ENCODE measurements at regions of chr4 and their contacts with region 1.

Region 1: GRCh38 chr4:2536193-2537010 is at the start of gene FAM193A:
- DNase-seq: peak; percentile 100
- H3K4me3 Mint-ChIP-seq: peak within 1 kb of the TSS; percentile 87
- H3K27ac Mint-ChIP-seq: peak within 1 kb of the TSS; percentile 86
- H3K4me1 Mint-ChIP-seq: peaks cover 20% of the 10 kb centered on the region
- H3K27me3 Mint-ChIP-seq: no peaks in the 10 kb centered on the region
- total RNA-seq, gene FAM193A: 21.7 to 22.6 TPM

Region 2: GRCh38 chr4:2484993-2485392 is 51.4 kb before region 1 on chr4:
- CTCF ChIA-PET with region 1: interaction called, 4 read pairs
- POLR2A ChIA-PET with region 1: no interaction called
- intact Hi-C with region 1: loop called (anchors 5 kb)
- DNase-seq: peak; percentile 80
- H3K4me3 Mint-ChIP-seq: peak overlapping the region; percentile 17
- H3K27ac Mint-ChIP-seq: peak overlapping the region; percentile 34
- H3K4me1 Mint-ChIP-seq: peaks cover 86% of the 10 kb centered on the region
- H3K27me3 Mint-ChIP-seq: no peaks in the 10 kb centered on the region

Region 3: GRCh38 chr4:2755837-2756694 is 219.7 kb after region 1 on chr4 and contains the start of gene TNIP2:
- CTCF ChIA-PET with region 1: no interaction called
- POLR2A ChIA-PET with region 1: no interaction called
- intact Hi-C with region 1: loop called (anchors 1 kb)
- DNase-seq: peak; percentile 86
- H3K4me3 Mint-ChIP-seq: peak within 1 kb of the TSS; percentile 84
- H3K27ac Mint-ChIP-seq: peak within 1 kb of the TSS; percentile 84
- H3K4me1 Mint-ChIP-seq: peaks cover 41% of the 10 kb centered on the region
- H3K27me3 Mint-ChIP-seq: no peaks in the 10 kb centered on the region
- total RNA-seq, gene TNIP2: 74.2 to 77.5 TPM

Measured in activated CD4-positive, alpha-beta memory T cell treated with anti-CD3 and anti-CD28 coated beads for 36 hours (primary cell).